ENCODE measurements at regions of chr11 and their contacts with region 1.

Region 1: GRCh38 chr11:57604296-57605027 is 7.0 kb downstream of the SERPING1 start:
- DNase-seq: no peak

Region 2: GRCh38 chr11:57584341-57584740 is 20.1 kb before region 1 on chr11:
- intact Hi-C with region 1: no loop called
- DNase-seq: no peak

Region 3: DNA sequence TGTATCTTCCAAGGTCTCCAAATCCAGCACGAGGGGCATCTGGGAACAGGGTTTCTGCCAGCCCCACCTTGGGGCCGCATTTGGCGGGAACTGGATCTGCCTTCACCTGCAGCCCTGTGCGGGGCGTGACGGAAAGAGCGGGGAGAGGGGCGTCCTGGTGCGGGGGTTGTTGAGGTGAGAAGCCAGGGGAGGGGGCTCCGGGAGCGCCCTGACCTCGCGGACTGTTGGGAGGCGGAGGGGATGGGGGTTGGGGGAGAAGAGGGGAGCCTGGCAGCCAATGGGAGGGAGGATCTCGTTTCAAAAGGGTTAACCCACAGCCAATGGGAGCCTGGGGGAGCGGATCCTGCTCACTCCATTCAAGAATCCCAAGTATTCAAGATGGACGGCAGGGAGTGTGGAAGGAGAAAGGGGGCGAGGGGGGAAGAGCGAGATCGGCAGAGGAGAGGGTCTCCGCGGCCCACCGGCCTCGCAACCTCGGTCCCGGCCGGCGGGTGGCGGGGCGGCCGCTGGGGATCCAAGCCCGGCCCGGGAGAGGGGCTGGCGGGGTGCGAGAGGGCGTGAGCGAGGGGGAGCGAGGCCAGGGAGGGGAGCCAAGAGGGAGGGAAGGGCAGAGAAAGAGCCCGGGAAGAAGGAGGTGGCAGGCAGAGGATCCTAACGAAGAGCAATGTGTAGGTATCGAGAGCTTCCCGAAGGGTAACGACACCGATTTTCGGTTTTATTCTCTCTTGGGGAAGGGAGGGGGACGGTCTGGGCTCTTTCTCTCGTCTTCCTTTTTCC is 33.7 kb after region 1 on chr11:
- intact Hi-C with region 1: loop called in 1 of 2 experiments (anchors 5 kb)
- DNase-seq: no peak

Measured in posterior vena cava (tissue), 2 donors.